ENCODE measurements at regions of chr12 and their contacts with region 1.

Region 1: GRCh38 chr12:53093777-53094393 is 3.6 kb upstream of the IGFBP6 start:
- DNase-seq: no peak
- ATAC-seq: no peak
- H3K4me3 Mint-ChIP-seq: no peak overlapping the region
- H3K27ac Mint-ChIP-seq: no peak overlapping the region
- H3K4me1 Mint-ChIP-seq: peaks cover 22% of the 10 kb centered on the region
- H3K27me3 Mint-ChIP-seq: peaks cover 2% of the 10 kb centered on the region
- CTCF ChIP-seq: no peak

Region 2: GRCh38 chr12:52380271-52380694 is 713.6 kb before region 1 on chr12:
- CTCF ChIA-PET with region 1: no interaction called
- POLR2A ChIA-PET with region 1: no interaction called
- intact Hi-C with region 1: no loop called
- DNase-seq: peak; percentile 43
- ATAC-seq: no peak
- H3K4me3 Mint-ChIP-seq: no peak overlapping the region
- H3K27ac Mint-ChIP-seq: no peak overlapping the region
- H3K4me1 Mint-ChIP-seq: peaks cover 13% of the 10 kb centered on the region
- H3K27me3 Mint-ChIP-seq: no peaks in the 10 kb centered on the region
- CTCF ChIP-seq: peak; percentile 42

Region 3: DNA sequence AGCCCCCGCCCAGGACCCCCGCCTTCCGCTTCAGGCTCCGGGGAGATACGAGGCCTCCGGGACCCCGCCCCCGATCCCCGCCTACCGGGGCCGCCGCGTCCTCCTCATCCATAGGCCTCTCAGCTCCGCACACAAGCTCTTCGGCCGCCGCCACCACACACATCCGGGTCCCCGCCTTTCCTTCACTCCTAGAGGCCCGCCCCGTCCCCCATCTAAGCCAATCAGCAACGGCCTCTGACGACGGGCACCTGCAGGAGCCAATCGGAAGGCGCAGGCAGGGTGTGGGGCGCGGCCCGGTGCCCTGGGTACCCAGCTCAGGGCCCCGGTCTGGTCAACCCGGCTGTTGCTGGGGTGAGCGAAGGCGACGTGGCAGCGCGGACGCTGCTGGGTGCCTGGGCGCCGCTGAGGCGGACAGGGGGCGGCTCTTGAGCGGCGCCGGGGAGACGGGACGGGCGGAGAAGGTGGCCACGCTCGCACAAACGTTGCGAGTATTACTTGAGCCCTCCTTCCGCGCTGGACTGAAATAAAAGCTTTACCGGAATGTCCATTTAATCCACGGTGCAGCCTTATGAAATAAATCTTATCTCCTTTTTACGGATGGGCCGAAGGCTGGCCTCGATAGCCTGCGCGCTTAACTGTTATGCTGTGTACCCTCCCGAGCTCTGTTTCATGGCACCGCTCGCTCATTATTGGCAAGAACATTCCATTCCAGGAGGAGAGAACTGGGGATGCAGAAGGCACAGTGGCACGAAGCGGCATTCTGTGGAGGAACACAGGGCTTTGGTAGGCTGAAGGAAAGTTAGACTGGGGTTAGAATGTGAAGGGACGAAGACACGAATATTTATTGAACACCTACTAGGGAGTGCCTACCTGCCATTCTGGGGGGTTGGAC is 14.4 kb before region 1 on chr12 and contains the start of gene SPRYD3:
- CTCF ChIA-PET with region 1: interaction called, 553 read pairs
- POLR2A ChIA-PET with region 1: interaction called, 27 read pairs
- intact Hi-C with region 1: loop called (anchors 1 kb)
- DNase-seq: peak; percentile 98
- ATAC-seq: peak; percentile 98
- H3K4me3 Mint-ChIP-seq: peak within 1 kb of the TSS; percentile 83
- H3K27ac Mint-ChIP-seq: peak within 1 kb of the TSS; percentile 80
- H3K4me1 Mint-ChIP-seq: peaks cover 34% of the 10 kb centered on the region
- H3K27me3 Mint-ChIP-seq: no peaks in the 10 kb centered on the region
- CTCF ChIP-seq: no peak
- total RNA-seq, gene SPRYD3: 24.8 to 25.0 TPM